SK-N-SH (cell line): ENCODE measurements at regions of chr12 and their contacts with region 1.

Region 1: DNA sequence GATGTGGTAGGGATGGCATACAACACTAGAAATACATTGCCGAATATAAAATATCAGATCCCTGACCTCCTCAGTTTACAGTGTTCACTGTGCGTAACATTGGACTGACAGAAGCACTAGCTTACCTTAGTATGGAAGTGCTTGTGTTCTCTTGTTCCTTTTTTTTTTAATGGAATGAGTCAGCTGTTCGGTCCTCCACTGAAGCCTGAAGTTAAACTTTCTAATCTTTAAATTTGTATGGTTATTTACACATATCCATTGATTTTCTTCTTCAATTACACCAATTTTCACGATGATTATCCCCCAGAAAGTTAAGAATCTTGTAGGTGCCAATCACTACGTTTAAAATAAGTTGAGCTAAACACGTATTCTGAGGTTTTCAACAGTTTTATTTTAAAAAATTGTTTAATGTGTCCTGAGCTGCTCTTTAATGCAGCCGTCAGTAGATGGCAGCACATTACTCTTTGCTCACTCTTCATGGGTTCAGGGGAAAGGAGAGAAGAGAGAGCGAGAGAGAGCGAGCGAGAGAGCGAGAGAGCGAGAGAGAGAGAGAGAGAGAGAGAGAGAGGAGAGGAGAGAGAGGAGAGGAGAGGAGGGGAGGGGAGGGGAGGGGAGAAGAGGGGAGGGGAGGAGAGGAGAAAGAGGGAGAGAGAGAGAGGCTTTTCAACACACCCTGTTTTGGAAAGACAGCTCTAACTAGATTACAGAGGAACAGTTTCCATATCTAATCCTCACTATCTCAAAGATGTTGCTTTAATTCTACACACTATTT is 134.7 kb upstream of the SCAF11 start:
- DNase-seq: peak; percentile 39
- H3K4me3 ChIP-seq: peak overlapping the region; percentile 9 to 41; a peak in 3 of 4 replicates
- H3K27ac ChIP-seq: peak overlapping the region in 1 of 2 experiments; percentile 41; a peak in 2 of 4 replicates
- H3K4me1 ChIP-seq: no peaks in the 10 kb centered on the region; a peak in 2 of 4 replicates
- H3K27me3 ChIP-seq: no peaks in the 10 kb centered on the region
- CTCF ChIP-seq: peak; percentile 84
- EP300 ChIP-seq: no peak
- RAD21 ChIP-seq: peak; percentile 75

Region 2: GRCh38 chr12:46136249-46136648 is 11.2 kb after region 1 on chr12:
- CTCF ChIA-PET with region 1: interaction called, 13 read pairs
- POLR2A ChIA-PET with region 1: no interaction called
- DNase-seq: no peak
- H3K4me3 ChIP-seq: no peak overlapping the region
- H3K27ac ChIP-seq: no peak overlapping the region
- H3K4me1 ChIP-seq: no peaks in the 10 kb centered on the region
- H3K27me3 ChIP-seq: no peaks in the 10 kb centered on the region
- CTCF ChIP-seq: no peak
- EP300 ChIP-seq: no peak
- RAD21 ChIP-seq: no peak

Region 3: DNA sequence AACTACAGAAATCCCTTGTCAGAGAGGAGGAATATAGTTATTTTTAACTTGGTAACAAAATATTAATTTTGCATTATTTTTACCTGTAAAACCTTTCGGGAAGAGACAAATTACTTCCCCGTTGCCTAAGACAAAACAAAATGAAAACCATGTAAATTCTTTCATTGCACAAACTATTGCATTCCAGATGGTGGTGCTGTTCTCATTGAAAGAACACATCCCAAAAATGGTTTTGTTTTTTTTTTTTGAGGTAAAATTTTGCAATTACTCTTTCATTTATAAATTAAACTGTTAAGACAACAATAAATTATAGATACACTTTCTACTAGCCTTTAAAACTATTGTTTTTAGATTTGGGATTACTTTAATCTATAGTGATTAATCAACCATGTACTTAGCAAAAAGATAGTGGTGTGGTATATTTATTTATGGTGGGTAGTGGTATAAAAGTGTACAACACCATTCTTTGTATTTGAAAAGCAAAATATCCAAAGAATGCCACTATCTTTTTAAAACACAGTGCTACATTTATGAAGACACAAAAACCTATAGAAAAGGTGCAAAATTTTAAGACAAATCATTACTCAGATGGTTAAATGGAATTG is 28.3 kb after region 1 on chr12:
- CTCF ChIA-PET with region 1: interaction called, 13 read pairs
- POLR2A ChIA-PET with region 1: no interaction called
- DNase-seq: peak; percentile 20
- H3K4me3 ChIP-seq: peak overlapping the region in 1 of 2 experiments; percentile 41; a peak in 1 of 4 replicates
- H3K27ac ChIP-seq: peak overlapping the region; percentile 85 to 86; a peak in 3 of 4 replicates
- H3K4me1 ChIP-seq: peaks cover 9 to 27% of the 10 kb centered on the region in 2 experiments; a peak in 2 of 4 replicates
- H3K27me3 ChIP-seq: no peaks in the 10 kb centered on the region
- CTCF ChIP-seq: peak; percentile 91
- EP300 ChIP-seq: no peak
- RAD21 ChIP-seq: peak; percentile 79

Region 4: DNA sequence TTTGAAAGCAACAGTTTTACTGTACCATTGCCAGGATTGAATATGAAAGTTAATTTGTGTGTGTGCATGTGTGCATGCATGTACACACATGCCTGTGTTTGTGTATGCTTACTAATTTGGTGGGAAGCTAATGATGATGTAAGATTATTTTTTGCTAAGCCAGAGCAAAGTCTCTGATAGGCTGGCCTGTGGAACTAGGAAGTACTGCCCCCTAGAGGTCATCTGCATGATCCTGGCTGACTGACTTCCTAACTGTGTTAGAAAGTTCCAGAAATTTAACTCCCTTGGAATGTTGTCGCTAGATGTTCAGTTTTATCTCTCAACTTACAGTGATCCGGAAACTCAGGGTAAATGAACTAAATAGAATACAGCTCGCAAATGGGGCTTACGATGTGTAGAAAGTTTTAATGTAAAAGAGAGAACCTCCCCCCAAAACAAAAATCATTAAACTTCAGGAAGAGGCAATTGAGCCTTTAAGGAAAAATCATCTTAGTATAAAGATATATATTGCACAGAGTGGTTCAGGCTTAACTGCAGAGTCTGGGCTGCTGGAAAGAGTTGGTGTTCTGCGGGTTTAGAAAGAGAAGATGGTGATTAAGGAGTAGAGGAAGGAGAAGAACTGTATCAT is 178.1 kb after region 1 on chr12:
- CTCF ChIA-PET with region 1: interaction called, 23 read pairs
- POLR2A ChIA-PET with region 1: no interaction called
- DNase-seq: peak; percentile 54
- H3K4me3 ChIP-seq: no peak overlapping the region; a peak in 1 of 4 replicates
- H3K27ac ChIP-seq: no peak overlapping the region
- H3K4me1 ChIP-seq: no peaks in the 10 kb centered on the region
- H3K27me3 ChIP-seq: no peaks in the 10 kb centered on the region
- CTCF ChIP-seq: peak; percentile 52
- EP300 ChIP-seq: no peak
- RAD21 ChIP-seq: peak; percentile 77

Region 5: DNA sequence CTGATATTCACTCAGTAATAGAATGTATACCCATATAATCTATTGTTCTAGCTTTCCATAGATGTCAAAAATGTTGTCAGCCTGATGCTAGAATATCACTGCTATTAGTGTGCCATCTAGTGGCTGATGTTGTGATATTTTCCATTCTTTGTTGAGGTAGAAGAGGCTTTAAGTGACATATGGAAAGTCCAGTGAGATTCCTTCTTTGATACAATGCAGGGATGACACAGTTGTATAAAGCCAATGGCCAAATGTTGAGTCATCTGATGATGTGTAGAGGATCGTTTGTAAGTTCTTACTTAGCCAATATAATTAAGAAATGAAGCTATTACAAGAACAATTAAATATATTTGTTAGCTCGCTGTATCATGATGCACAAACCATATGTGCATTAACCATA is 896.3 kb after region 1 on chr12:
- CTCF ChIA-PET with region 1: interaction called, 15 read pairs
- POLR2A ChIA-PET with region 1: no interaction called
- DNase-seq: peak; percentile 17
- H3K4me3 ChIP-seq: no peak overlapping the region
- H3K27ac ChIP-seq: peak overlapping the region; percentile 76 to 89
- H3K4me1 ChIP-seq: peaks cover 0 to 18% of the 10 kb centered on the region in 2 experiments
- H3K27me3 ChIP-seq: no peaks in the 10 kb centered on the region
- CTCF ChIP-seq: peak; percentile 77
- EP300 ChIP-seq: peak in 1 of 2 experiments; percentile 29; a peak in 1 of 4 replicates
- RAD21 ChIP-seq: peak; percentile 75